ENCODE measurements at regions of chr11 and their contacts with region 1.

Region 1: GRCh38 chr11:62306227-62306626 is 7.4 kb upstream of the SCGB1D4 start:
- DNase-seq: no peak
- H3K4me3 ChIP-seq: no peak overlapping the region
- H3K27ac ChIP-seq: no peak overlapping the region
- H3K4me1 ChIP-seq: no peaks in the 10 kb centered on the region
- H3K27me3 ChIP-seq: peaks cover 72% of the 10 kb centered on the region
- CTCF ChIP-seq: no peak

Region 2: GRCh38 chr11:62245271-62245753 is 60.9 kb before region 1 on chr11:
- CTCF ChIA-PET with region 1: no interaction called
- POLR2A ChIA-PET with region 1: no interaction called
- intact Hi-C with region 1: loop called (anchors 10 kb)
- DNase-seq: peak in 1 of 2 experiments; percentile 25
- H3K4me3 ChIP-seq: no peak overlapping the region
- H3K27ac ChIP-seq: no peak overlapping the region
- H3K4me1 ChIP-seq: no peaks in the 10 kb centered on the region
- H3K27me3 ChIP-seq: peaks cover 34% of the 10 kb centered on the region; the same call in 1 of the 2 replicates
- CTCF ChIP-seq: peak; percentile 38; the same call in 1 of the 2 replicates

Region 3: DNA sequence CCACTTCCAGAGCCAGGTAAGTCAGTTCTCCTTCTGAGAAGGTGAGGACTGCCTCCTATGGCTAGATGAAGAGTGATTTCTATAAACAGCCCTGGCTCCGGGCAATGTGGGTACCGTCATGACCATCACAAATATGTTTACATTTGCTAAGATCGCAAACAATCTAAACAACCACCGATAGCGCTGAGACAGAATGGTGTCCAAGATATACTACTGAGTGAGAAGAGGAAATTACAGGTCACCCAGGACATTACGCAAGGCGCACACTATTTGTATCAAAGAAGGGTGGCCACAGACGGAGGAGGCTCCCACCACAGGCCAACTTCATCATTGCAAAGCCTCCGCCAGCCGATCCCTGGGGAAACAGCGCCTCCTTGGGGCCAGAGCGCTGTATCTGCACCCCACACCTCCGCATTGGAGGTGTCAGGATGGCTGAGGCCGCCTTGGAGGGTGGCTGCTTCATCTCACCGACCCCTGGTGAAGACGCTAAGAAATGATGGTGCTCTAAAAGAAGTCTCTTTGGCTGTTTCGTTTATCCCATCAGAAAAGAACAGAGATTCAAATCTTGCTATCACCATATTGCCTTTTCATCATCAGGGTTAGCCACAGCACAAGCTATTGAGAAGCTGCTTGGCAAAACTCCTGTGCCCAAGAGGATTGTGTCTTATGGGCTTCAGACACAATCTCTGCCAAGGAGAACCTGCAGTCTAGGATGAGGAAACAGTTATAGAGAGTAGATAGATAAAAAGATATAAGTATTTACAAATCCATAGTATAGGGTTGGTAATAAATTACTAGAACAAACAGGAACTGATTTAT is 18.7 kb after region 1 on chr11:
- CTCF ChIA-PET with region 1: no interaction called
- POLR2A ChIA-PET with region 1: no interaction called
- intact Hi-C with region 1: no loop called
- DNase-seq: peak in 1 of 2 experiments; percentile 52
- H3K4me3 ChIP-seq: no peak overlapping the region
- H3K27ac ChIP-seq: no peak overlapping the region
- H3K4me1 ChIP-seq: no peaks in the 10 kb centered on the region
- H3K27me3 ChIP-seq: peaks cover 62% of the 10 kb centered on the region
- CTCF ChIP-seq: peak; percentile 72